Mammary epithelial cell (primary cell): ENCODE measurements at regions of chr4 and their contacts with region 1.

Region 1: GRCh38 chr4:122224348-122224747 is 72.2 kb downstream of the BLTP1 start:
- DNase-seq: peak; percentile 0
- H3K4me3 ChIP-seq: no peak overlapping the region
- H3K27ac ChIP-seq: no peak overlapping the region
- H3K4me1 ChIP-seq: no peaks in the 10 kb centered on the region
- H3K27me3 ChIP-seq: no peaks in the 10 kb centered on the region
- CTCF ChIP-seq: peak; percentile 14 to 27

Region 2: GRCh38 chr4:121998002-121998401 is 226.3 kb before region 1 on chr4:
- CTCF ChIA-PET with region 1: no interaction called
- dilution Hi-C with region 1: no loop called
- in situ Hi-C with region 1: no loop called
- intact Hi-C with region 1: loop called (anchors 1 kb)
- DNase-seq: no peak
- H3K4me3 ChIP-seq: no peak overlapping the region
- H3K27ac ChIP-seq: no peak overlapping the region
- H3K4me1 ChIP-seq: no peaks in the 10 kb centered on the region
- H3K27me3 ChIP-seq: peaks cover 6% of the 10 kb centered on the region
- CTCF ChIP-seq: no peak

Region 3: GRCh38 chr4:122930862-122931261 is 706.5 kb after region 1 on chr4:
- CTCF ChIA-PET with region 1: no interaction called
- dilution Hi-C with region 1: no loop called
- in situ Hi-C with region 1: no loop called
- intact Hi-C with region 1: no loop called
- DNase-seq: no peak
- H3K4me3 ChIP-seq: no peak overlapping the region
- H3K27ac ChIP-seq: no peak overlapping the region
- H3K4me1 ChIP-seq: no peaks in the 10 kb centered on the region
- H3K27me3 ChIP-seq: no peaks in the 10 kb centered on the region
- CTCF ChIP-seq: peak; percentile 43 to 49